Activated naive CD4-positive, alpha-beta T cell treated with anti-CD3 and anti-CD28 coated beads for 36 hours (primary cell): ENCODE measurements at regions of chr19 and their contacts with region 1.

Region 1: DNA sequence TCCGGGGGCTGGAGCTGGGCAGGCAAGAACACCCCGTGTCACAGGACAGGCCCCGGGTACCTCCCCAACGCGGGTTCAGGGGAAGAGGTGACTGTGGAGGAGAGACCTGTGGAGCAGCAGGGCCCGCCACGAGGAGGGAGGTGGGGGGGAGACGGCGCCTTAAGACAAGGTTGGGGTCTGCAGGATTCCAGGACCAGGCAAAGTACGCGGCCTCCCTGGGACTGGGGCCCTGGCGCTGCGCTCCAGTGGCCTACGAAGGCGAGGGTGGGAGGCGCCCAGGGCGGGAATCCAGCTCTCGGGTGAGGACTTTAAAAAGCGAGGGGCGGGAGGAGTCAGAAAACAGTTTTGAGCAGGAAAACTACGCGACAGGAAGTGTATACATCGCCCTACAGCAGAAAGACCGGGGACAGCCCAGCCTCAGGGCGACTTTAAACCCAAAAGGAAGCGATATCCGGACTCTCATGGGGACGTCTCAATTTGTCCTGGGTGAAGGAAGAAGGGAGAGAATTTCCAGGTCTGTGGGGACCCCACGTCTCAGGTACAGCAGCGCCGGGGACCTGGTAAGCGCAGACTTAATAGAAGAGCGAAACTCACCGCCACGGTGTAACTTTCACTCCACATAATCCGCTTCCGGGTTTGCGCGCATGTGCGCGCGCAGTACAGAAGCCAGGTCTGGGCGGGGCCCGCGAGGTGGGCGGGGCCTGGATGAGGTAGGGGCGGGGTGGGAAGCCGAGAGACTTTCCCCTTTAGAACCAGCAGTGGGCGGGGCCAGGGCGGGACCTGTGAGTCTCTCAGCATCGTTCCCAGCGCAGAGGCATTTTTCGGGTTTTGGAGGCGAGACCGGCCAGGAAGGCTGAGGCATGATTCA is at the start of gene ZNF83:
- DNase-seq: peak; percentile 96
- H3K4me3 Mint-ChIP-seq: peak within 1 kb of the TSS; percentile 85
- H3K27ac Mint-ChIP-seq: peak within 1 kb of the TSS; percentile 92
- H3K4me1 Mint-ChIP-seq: peaks cover 9% of the 10 kb centered on the region
- H3K27me3 Mint-ChIP-seq: no peaks in the 10 kb centered on the region
- total RNA-seq, gene ZNF83: 23.3 to 23.9 TPM

Region 2: GRCh38 chr19:52464798-52465470 is 173.0 kb before region 1 on chr19:
- CTCF ChIA-PET with region 1: no interaction called
- intact Hi-C with region 1: no loop called
- DNase-seq: no peak
- H3K4me3 Mint-ChIP-seq: no peak overlapping the region
- H3K27ac Mint-ChIP-seq: no peak overlapping the region
- H3K4me1 Mint-ChIP-seq: no peaks in the 10 kb centered on the region
- H3K27me3 Mint-ChIP-seq: no peaks in the 10 kb centered on the region

Region 3: DNA sequence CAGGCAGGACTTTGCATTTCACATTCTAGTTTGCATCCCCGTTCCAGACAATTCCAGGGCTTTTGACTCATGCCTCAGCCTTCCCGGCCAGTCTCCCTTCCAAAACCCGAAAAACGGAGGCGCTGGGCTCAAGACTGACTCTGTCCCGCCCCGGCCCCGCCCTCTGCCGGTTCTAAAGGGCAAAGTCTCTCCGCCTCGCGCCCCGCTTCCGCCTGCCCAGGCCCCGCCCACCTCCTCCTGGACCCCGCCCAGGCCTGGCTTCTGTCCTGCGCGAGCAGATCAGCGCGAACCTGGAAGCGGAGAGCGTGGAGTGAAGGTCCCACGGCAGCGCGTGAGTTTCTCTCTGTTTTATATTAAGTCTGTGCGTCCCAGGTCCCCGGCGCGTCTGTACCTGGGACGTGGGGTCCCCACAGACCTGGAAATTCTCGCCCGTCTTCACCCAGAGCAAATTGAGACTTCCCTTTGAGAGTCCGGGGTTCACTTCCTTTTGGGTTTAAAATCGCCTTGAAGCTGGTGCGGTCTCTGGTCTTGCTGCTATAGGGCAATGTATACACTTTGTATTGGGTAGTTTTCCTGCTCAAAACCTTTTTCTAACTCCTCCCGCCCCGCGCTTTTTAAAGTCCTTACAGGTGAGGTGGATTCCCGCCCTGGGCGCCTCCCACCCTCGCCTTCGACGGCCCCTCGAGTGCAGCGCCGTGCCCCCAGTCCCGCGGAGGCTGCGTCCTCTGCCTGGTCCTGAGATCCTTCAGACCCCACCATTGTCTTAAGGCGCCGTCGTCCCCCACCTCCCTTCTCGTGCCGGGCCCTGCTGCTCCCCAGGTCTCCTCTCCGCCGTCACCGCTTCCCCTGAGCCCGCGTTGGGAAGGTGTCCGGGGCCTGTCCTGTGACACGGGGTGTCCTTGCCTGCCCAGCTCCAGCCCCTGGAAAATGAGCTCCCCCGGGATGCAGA is 36.7 kb before region 1 on chr19:
- CTCF ChIA-PET with region 1: no interaction called
- intact Hi-C with region 1: loop called (anchors 5 kb)
- DNase-seq: peak; percentile 95
- H3K4me3 Mint-ChIP-seq: peak overlapping the region; percentile 79
- H3K27ac Mint-ChIP-seq: peak overlapping the region; percentile 79
- H3K4me1 Mint-ChIP-seq: peaks cover 18% of the 10 kb centered on the region
- H3K27me3 Mint-ChIP-seq: no peaks in the 10 kb centered on the region